PC-3 (cell line): ENCODE measurements at regions of chr12 and their contacts with region 1.

Region 1: DNA sequence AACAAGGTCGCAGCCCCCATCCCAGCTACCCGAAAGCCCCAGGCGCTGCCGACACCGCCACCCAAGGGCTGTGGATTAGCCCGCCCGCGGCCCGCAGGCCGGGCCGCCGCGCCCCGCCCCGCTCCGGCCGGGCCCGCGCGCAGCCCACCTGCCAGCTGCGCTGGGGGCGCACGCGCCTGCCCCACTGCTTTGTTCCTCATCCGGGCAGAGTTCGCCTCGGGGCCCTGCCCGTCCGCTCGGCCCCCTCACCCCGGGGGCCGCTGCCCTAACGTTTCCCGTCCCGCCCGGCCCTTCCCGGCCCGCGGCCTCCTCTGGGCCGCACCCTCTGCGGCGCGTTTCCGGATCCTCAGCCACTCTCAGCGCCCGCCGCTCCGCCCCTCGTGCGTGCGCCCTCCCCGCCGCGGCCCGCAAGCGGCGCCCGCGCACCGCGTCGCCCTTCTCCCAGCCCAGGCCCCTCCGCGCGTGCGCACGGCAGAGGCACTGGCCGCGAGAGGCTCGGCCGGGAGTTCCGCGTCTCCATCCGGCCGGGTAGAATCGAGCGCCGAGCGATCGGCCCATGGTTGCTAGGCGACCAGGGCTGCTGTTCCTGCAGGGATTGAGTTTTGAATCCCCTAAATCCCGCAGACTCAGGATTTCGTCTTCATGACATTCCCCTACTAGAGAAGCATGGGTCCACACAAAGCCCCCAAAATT is at the start of gene PRDM4:
- DNase-seq: peak; percentile 98
- ATAC-seq: peak; percentile 93
- H3K4me3 ChIP-seq: peak within 1 kb of the TSS; percentile 80
- H3K27ac ChIP-seq: peak within 1 kb of the TSS; percentile 57; the same call in 1 of the 2 replicates
- H3K4me1 ChIP-seq: peaks cover 17% of the 10 kb centered on the region
- H3K27me3 ChIP-seq: no peaks in the 10 kb centered on the region
- CTCF ChIP-seq: peak; percentile 36; the same call in 1 of the 2 replicates
- total RNA-seq, gene PRDM4: 22.6 and 33.2 TPM in 2 replicates

Region 2: GRCh38 chr12:107515446-107515958 is 245.5 kb before region 1 on chr12:
- CTCF ChIA-PET with region 1: no interaction called
- POLR2A ChIA-PET with region 1: no interaction called
- intact Hi-C with region 1: no loop called
- DNase-seq: peak; percentile 98
- ATAC-seq: peak; percentile 84
- H3K4me3 ChIP-seq: 0 out of 2 replicates have a peak overlapping the region, but pooled peaks have one; percentile 17
- H3K27ac ChIP-seq: peak overlapping the region; percentile 75
- H3K4me1 ChIP-seq: peaks cover 25% of the 10 kb centered on the region
- H3K27me3 ChIP-seq: no peaks in the 10 kb centered on the region
- CTCF ChIP-seq: no peak

Region 3: GRCh38 chr12:107545737-107546353 is 215.1 kb before region 1 on chr12:
- CTCF ChIA-PET with region 1: no interaction called
- POLR2A ChIA-PET with region 1: no interaction called
- intact Hi-C with region 1: no loop called
- DNase-seq: no peak
- ATAC-seq: no peak
- H3K4me3 ChIP-seq: no peak overlapping the region
- H3K27ac ChIP-seq: no peak overlapping the region
- H3K4me1 ChIP-seq: no peaks in the 10 kb centered on the region
- H3K27me3 ChIP-seq: no peaks in the 10 kb centered on the region
- CTCF ChIP-seq: no peak

Region 4: GRCh38 chr12:107564946-107565345 is 196.0 kb before region 1 on chr12:
- CTCF ChIA-PET with region 1: no interaction called
- POLR2A ChIA-PET with region 1: no interaction called
- intact Hi-C with region 1: no loop called
- DNase-seq: peak; percentile 61
- ATAC-seq: no peak
- H3K4me3 ChIP-seq: no peak overlapping the region
- H3K27ac ChIP-seq: no peak overlapping the region
- H3K4me1 ChIP-seq: no peaks in the 10 kb centered on the region
- H3K27me3 ChIP-seq: no peaks in the 10 kb centered on the region
- CTCF ChIP-seq: peak; percentile 74

Region 5: DNA sequence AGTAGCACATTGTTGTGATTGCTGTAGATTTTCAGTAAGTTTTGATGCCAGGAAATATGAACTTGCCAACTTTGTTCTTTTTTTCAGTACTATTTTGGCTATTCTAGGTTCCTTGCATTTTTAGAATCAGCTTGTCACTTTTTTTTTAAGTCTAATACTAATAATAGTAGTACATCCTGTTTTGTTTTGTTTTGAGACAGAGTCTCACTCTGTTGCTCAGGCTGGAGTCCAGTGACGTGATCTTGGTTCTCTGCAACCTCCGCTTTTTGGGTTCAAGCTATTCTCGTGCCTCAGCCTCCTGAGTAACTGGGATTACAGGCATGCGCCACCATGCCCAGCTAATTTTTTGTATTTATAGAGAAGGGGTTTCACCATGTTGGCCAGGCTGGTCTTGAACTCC is 58.8 kb before region 1 on chr12:
- CTCF ChIA-PET with region 1: no interaction called
- POLR2A ChIA-PET with region 1: no interaction called
- intact Hi-C with region 1: no loop called
- DNase-seq: no peak
- ATAC-seq: no peak
- H3K4me3 ChIP-seq: no peak overlapping the region
- H3K27ac ChIP-seq: no peak overlapping the region
- H3K4me1 ChIP-seq: no peaks in the 10 kb centered on the region
- H3K27me3 ChIP-seq: no peaks in the 10 kb centered on the region
- CTCF ChIP-seq: no peak

Region 6: GRCh38 chr12:107748472-107748871 is 12.5 kb before region 1 on chr12:
- CTCF ChIA-PET with region 1: no interaction called
- POLR2A ChIA-PET with region 1: no interaction called
- intact Hi-C with region 1: loop called (anchors 1 kb)
- DNase-seq: peak; percentile 91
- ATAC-seq: peak; percentile 80
- H3K4me3 ChIP-seq: peak overlapping the region; percentile 46
- H3K27ac ChIP-seq: peak overlapping the region; percentile 76
- H3K4me1 ChIP-seq: peaks cover 56% of the 10 kb centered on the region
- H3K27me3 ChIP-seq: no peaks in the 10 kb centered on the region
- CTCF ChIP-seq: no peak

Region 7: GRCh38 chr12:107884769-107885694 is 124.1 kb after region 1 on chr12:
- CTCF ChIA-PET with region 1: no interaction called
- POLR2A ChIA-PET with region 1: no interaction called
- intact Hi-C with region 1: loop called (anchors 2 kb)
- DNase-seq: peak; percentile 72
- ATAC-seq: peak; percentile 89
- H3K4me3 ChIP-seq: no peak overlapping the region
- H3K27ac ChIP-seq: no peak overlapping the region
- H3K4me1 ChIP-seq: no peaks in the 10 kb centered on the region
- H3K27me3 ChIP-seq: peaks cover 45% of the 10 kb centered on the region
- CTCF ChIP-seq: peak; percentile 92